HepG2 (cell line): ENCODE measurements at regions of chr13 and their contacts with region 1.

Region 1: GRCh38 chr13:100734194-100734720 is 59.7 kb upstream of the TMTC4 start:
- DNase-seq: peak; percentile 97
- ATAC-seq: peak; percentile 99
- H3K4me3 ChIP-seq: peak overlapping the region in 1 of 3 experiments; percentile 6; a peak in 1 of 6 replicates
- H3K27ac ChIP-seq: peak overlapping the region; percentile 94
- H3K4me1 ChIP-seq: peaks cover 49% of the 10 kb centered on the region
- H3K27me3 ChIP-seq: no peaks in the 10 kb centered on the region
- CTCF ChIP-seq: peak; percentile 6; the same call in 1 of the 2 replicates
- EP300 ChIP-seq: peak; percentile 62 to 99; a peak in 3 of 4 replicates
- POLR2A ChIP-seq: no peak
- RAD21 ChIP-seq: peak; percentile 22; the same call in 1 of the 2 replicates

Region 2: GRCh38 chr13:100514788-100515409 is 219.4 kb before region 1 on chr13:
- CTCF ChIA-PET with region 1: no interaction called
- POLR2A ChIA-PET with region 1: no interaction called
- in situ Hi-C with region 1: no loop called
- intact Hi-C with region 1: no loop called
- DNase-seq: peak; percentile 56
- ATAC-seq: peak; percentile 92
- H3K4me3 ChIP-seq: no peak overlapping the region
- H3K27ac ChIP-seq: no peak overlapping the region
- H3K4me1 ChIP-seq: peaks cover 31% of the 10 kb centered on the region
- H3K27me3 ChIP-seq: no peaks in the 10 kb centered on the region
- CTCF ChIP-seq: peak; percentile 93
- EP300 ChIP-seq: no peak
- POLR2A ChIP-seq: no peak
- RAD21 ChIP-seq: peak; percentile 84

Region 3: DNA sequence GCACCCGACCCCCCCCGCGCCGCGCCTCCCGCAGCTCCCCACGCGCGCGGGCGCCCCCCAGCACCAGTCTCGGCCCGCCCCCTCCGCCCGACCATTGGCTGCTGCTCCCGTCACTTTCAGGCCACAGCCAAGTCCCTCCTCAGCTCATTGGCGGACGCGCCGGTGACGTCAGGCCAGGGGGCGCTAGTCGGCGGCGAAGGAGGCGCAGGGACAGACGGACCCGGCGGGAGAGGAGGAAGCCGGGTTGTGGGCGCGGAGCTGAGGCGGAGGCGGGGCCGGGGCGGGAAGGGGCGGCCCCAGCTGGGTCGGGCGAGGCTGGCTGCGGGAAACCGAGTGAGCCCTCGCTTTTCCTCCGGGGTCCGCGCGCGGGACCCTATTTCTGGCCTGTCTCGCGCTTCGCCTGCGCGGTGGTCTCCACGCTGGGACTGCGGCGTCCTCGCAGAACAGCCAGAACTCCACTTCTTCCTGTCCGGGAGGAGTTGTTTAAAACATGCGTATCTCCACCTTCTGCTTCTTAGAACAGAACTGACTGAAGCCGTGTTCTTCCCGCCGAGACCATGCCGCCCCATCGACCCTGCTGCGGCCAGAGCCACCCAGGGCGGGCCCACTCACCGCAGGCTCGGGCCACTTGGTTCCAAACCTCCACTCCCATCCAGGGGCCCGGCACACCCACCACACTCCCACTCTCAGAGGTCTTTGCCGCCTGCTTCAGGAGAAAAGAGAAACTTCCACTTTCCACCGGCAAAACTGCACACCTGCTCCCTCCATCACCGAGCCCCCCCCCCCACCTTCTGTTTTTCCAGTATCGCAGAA is 59.2 kb before region 1 on chr13:
- CTCF ChIA-PET with region 1: no interaction called
- POLR2A ChIA-PET with region 1: interaction called, 7 read pairs
- in situ Hi-C with region 1: no loop called
- intact Hi-C with region 1: loop called (anchors 1 kb)
- DNase-seq: peak; percentile 93
- ATAC-seq: peak; percentile 93
- H3K4me3 ChIP-seq: peak overlapping the region; percentile 62 to 80 (median 78)
- H3K27ac ChIP-seq: peak overlapping the region; percentile 71
- H3K4me1 ChIP-seq: peaks cover 34% of the 10 kb centered on the region
- H3K27me3 ChIP-seq: 0 out of 5 replicates have a peak, but pooled peaks cover 0 to 4% of the 10 kb centered on the region in 2 experiments
- CTCF ChIP-seq: peak; percentile 88
- EP300 ChIP-seq: no peak
- POLR2A ChIP-seq: peak; percentile 20 to 83; a peak in 3 of 4 replicates
- RAD21 ChIP-seq: no peak; the same call in 1 of the 2 replicates

Region 4: DNA sequence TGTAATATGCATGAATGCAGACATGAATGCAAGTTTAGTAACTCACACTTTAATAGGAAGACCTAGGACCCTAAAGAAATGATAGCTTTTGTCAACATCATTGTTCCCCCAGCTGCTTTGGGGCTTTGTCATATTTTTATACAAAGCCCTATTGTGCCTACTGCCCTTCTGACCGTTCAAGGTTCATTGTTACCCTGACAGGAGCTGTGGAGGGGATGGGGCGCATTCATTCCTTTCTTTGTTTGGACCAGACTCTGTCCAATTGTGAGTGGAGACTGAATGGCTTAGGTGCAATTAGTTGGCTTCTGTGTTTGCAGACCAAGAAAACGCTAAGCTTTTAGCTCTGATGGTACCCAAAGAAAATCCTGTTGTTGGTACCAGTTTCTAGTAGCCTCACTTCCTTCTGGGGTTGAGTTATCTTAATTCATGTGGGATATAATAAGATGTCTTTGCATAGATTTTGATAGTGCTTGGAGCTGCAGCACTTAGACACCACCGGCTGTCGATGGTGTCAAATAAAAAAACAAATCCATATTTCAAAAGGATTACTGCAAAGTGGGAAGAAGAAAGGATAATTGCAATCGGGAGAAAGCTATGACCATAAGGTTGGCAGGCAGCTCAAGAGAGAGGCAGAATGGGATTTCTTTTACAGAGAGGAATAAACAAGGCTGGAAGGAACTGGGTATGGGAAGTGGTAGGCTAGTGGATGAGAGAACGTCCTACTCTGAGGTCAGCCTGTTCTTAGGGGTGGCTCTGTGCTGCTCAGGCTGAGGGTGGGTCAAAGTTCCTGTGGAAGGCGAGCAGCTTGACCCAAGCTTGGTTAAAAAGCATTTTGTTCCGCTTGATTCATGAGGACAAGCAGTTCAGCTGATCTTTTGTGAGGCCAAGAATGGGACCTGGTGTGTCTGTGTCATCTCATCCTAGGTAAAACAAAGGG is 74.3 kb after region 1 on chr13:
- CTCF ChIA-PET with region 1: no interaction called
- POLR2A ChIA-PET with region 1: no interaction called
- in situ Hi-C with region 1: no loop called
- intact Hi-C with region 1: loop called (anchors 1 kb)
- DNase-seq: peak; percentile 92
- ATAC-seq: peak; percentile 98
- H3K4me3 ChIP-seq: no peak overlapping the region
- H3K27ac ChIP-seq: no peak overlapping the region
- H3K4me1 ChIP-seq: peaks cover 50% of the 10 kb centered on the region
- H3K27me3 ChIP-seq: no peaks in the 10 kb centered on the region; a peak in 1 of 5 replicates
- CTCF ChIP-seq: no peak
- EP300 ChIP-seq: peak in 1 of 2 experiments; percentile 58; a peak in 2 of 4 replicates
- POLR2A ChIP-seq: no peak
- RAD21 ChIP-seq: no peak